Posterior vena cava (tissue), 2 donors: ENCODE measurements at regions of chrX and their contacts with region 1.

Region 1: GRCh38 chrX:41137589-41137988 is 52.3 kb downstream of the USP9X start:
- DNase-seq: no peak

Region 2: DNA sequence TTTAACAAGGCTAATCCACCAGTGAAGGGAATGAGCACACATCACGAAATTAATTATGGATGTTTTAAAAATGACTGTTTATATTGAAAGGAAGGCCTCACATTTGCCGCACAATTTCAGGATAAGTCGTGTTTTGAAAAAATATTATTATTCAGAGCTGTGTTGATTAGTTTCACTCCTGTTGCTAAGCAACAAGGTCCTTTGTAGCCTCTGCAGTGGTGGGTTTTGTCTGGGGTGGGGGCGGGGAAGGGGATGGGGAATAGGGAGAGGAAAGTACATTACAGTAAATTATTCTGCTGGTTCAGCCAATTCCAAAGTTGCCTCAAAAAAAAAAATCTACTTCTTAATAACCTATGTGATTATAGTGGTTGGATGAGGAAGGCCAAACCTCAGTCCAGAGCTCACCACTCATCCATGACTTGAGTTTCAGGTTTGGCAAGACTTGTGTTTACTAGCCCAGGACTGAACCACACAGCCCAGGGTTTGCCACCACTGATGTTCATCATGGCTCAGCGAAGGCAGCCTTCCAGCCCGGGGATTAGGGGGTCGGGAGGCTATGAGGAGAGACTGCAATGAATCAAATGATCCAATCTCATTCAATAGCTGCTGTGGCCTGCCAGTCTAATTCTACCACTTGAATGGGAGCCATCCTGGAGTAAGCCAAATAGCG is 719.3 kb before region 1 on chrX:
- intact Hi-C with region 1: loop called in 1 of 2 experiments (anchors 5 kb)
- DNase-seq: no peak

Region 3: GRCh38 chrX:41192880-41193279 is 55.3 kb after region 1 on chrX:
- intact Hi-C with region 1: loop called in 1 of 2 experiments (anchors 2 kb)
- DNase-seq: no peak